A549 (cell line): ENCODE measurements at regions of chr6 and their contacts with region 1.

Region 1: GRCh38 chr6:32432050-32432450 is 7.6 kb upstream of the HLA-DRA start:
- DNase-seq: peak; percentile 7 to 21
- ATAC-seq: no peak
- H3K4me3 ChIP-seq: no peak overlapping the region
- H3K27ac ChIP-seq: no peak overlapping the region
- H3K4me1 ChIP-seq: no peaks in the 10 kb centered on the region
- CTCF ChIP-seq: peak; percentile 49
- EP300 ChIP-seq: no peak
- POLR2A ChIP-seq: no peak
- RAD21 ChIP-seq: peak; percentile 51 to 61; a peak in 4 of 5 replicates

Region 2: DNA sequence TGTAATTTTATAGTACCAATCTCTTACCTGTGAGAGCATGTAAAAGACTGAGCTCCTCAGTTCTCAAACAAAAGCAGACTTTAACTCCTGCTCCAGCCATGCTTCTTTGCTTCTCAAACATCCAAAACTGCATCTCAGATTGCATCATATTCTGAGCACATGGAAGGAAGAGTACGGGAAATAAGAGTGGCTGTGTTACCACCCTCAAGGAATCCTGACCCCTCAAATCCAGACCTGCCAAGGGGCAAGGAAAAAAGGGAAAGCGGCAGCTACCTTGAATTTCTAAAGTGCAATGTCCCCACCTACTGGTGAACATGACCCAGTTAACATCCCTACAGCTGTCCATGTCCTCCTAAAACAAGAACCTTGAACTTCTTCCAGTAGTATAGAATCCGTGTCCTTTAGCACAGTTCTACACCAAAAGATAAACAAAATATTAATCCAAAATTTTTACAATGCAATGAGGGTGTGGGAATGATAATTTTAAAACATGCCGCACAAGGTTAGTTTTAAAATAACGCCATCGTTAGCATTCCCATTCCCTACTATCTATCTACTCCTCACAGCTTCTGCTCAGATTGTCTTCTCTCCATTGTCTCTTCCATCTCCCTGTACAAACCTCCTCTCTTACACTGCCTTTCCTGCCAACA is 268.5 kb after region 1 on chr6:
- CTCF ChIA-PET with region 1: interaction called, 22 read pairs
- POLR2A ChIA-PET with region 1: no interaction called
- DNase-seq: peak; percentile 19 to 58
- ATAC-seq: peak; percentile 73 to 86; a peak in 5 of 6 replicates
- H3K4me3 ChIP-seq: no peak overlapping the region
- H3K27ac ChIP-seq: no peak overlapping the region
- H3K4me1 ChIP-seq: no peaks in the 10 kb centered on the region
- CTCF ChIP-seq: peak; percentile 76
- EP300 ChIP-seq: no peak
- POLR2A ChIP-seq: no peak
- RAD21 ChIP-seq: peak; percentile 74 to 75